Sigmoid colon (tissue), 7 donors: ENCODE measurements at regions of chr1 and their contacts with region 1.

Region 1: DNA sequence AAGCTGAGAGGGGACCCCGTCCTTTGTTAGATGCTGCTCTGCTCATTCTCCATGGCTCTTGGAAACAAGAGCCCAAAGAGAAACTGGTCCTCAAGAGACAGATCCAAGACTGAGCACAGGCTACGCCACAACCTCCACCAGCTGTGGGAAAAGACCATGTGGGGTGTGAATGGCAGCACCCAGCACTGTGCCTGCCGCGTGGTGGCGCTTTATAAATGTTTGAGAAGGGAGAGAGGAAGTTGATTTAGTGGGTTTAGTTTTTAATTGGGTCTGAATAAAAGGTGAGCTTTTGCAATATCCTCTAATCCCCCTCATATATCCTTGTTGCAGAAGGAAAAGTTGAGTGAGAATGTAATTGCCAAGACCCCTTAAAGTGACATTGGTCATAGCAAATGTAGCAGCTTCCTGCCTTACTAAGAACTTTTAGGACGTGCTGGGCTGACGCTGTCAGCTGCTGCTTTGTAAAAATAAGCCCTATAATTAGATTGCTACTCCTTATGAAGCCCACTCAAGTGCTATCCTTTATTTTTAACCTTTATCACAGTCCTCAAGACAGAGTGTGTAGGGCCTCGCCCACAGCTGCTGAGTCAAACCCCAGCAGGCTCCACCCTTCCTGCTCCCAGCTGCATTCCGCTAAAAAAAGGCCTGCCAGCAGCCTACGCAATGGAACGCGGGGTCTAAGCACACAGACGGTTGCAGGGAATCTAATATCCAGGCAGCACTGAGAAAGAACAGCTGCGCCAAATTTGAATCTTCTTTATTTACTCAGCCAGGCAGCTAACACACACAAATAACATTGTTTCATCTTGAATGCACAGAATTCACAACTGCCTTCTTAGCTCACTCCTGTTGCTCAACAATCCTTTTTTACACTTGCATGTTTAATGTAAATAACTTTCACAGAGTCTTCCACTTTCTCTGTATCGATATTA is 47.4 kb upstream of the PRDX6 start:
- DNase-seq: peak; percentile 96
- H3K4me3 ChIP-seq: peak overlapping the region in 2 of 4 donors; percentile 9 to 20
- H3K27ac ChIP-seq: peak overlapping the region; percentile 80 to 90 (median 84)
- H3K4me1 ChIP-seq: peaks cover 0 to 29% (median 25%) of the 10 kb centered on the region in 4 donors
- H3K27me3 ChIP-seq: no peaks in the 10 kb centered on the region
- CTCF ChIP-seq: peak; percentile 35 to 48 (median 44)
- EP300 ChIP-seq: no peak
- POLR2A ChIP-seq: no peak

Region 2: GRCh38 chr1:173451981-173452380 is 22.2 kb after region 1 on chr1:
- intact Hi-C with region 1: loop called (anchors 1 kb)
- DNase-seq: peak; percentile 86
- H3K4me3 ChIP-seq: no peak overlapping the region
- H3K27ac ChIP-seq: peak overlapping the region; percentile 49 to 83 (median 57)
- H3K4me1 ChIP-seq: peaks cover 0 to 14% (median 10%) of the 10 kb centered on the region in 4 donors
- H3K27me3 ChIP-seq: no peaks in the 10 kb centered on the region
- CTCF ChIP-seq: no peak
- EP300 ChIP-seq: no peak
- POLR2A ChIP-seq: no peak

Region 3: GRCh38 chr1:173476664-173477285 is 47.0 kb after region 1 on chr1:
- intact Hi-C with region 1: loop called (anchors 2 kb)
- DNase-seq: peak; percentile 97
- H3K4me3 ChIP-seq: peak overlapping the region; percentile 75 to 92 (median 85)
- H3K27ac ChIP-seq: peak overlapping the region; percentile 98 to 99 (median 99)
- H3K4me1 ChIP-seq: peaks cover 0 to 52% (median 46%) of the 10 kb centered on the region in 4 donors
- H3K27me3 ChIP-seq: no peaks in the 10 kb centered on the region
- CTCF ChIP-seq: no peak
- EP300 ChIP-seq: no peak
- POLR2A ChIP-seq: peak; percentile 18 to 27

Region 4: DNA sequence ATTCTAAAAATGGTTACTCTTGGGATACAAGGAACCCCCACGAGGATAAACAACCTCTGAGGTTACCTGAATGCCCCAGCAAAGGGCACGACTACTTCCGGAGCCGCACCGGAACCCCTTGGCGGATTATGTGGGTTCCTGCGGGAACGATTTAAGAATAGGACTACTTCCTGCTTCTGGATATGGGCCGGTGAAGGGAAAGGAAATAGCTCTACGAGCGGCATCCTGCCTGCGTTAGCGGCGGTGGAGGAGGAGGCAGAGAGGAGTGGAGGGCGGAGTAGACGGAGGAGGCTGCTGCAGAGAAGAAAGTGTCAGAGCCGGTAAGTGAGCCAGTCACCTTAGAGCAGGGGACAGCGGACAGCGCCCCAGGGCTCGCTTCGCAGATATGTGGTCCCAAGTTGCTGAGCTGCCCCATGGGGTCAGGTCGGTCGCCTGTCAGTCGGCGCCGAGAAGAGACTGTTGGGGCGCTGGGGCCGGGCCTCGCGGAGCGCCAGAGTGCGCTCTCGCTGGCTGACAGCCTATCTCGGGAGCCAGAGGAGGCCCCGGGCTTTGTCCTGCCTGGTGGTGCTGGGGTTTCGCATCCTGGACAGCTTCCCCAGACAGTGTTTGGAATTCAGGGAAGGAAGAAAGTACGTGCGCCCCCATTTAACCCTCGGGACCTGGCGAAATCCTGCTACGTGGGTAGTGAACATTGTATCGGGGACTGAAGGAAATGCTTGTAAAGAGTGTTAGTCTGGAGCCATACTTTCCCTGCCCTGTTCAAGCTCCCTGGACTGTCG is 285.2 kb after region 1 on chr1 and contains the start of gene KLHL20:
- intact Hi-C with region 1: loop called (anchors 2 kb)
- DNase-seq: peak; percentile 89
- H3K4me3 ChIP-seq: peak within 1 kb of the TSS; percentile 60 to 82 (median 70)
- H3K27ac ChIP-seq: peak within 1 kb of the TSS; percentile 87 to 94 (median 94)
- H3K4me1 ChIP-seq: peaks cover 0 to 27% (median 19%) of the 10 kb centered on the region in 4 donors
- H3K27me3 ChIP-seq: peaks cover 0 to 14% (median 0%) of the 10 kb centered on the region in 3 donors
- CTCF ChIP-seq: peak in 2 of 4 experiments; percentile 21 to 38
- EP300 ChIP-seq: no peak
- POLR2A ChIP-seq: peak; percentile 51 to 61
- total RNA-seq, gene KLHL20: 35.5 to 57.7 (median 42.6) TPM

Region 5: GRCh38 chr1:173824331-173825081 is 394.8 kb after region 1 on chr1 and contains the starts of genes CENPL and DARS2:
- intact Hi-C with region 1: loop called (anchors 5 kb)
- DNase-seq: peak; percentile 99
- H3K4me3 ChIP-seq: peak within 1 kb of the TSS; percentile 55 to 78 (median 69)
- H3K27ac ChIP-seq: peak within 1 kb of the TSS; percentile 87 to 92 (median 91)
- H3K4me1 ChIP-seq: peaks cover 0 to 25% (median 19%) of the 10 kb centered on the region in 4 donors
- H3K27me3 ChIP-seq: no peaks in the 10 kb centered on the region
- CTCF ChIP-seq: no peak
- EP300 ChIP-seq: peak in 1 of 4 donors; percentile 2
- POLR2A ChIP-seq: no peak
- total RNA-seq, gene CENPL: 3.8 to 7.8 (median 5.4) TPM
- total RNA-seq, gene DARS2: 5.2 to 10.0 (median 7.3) TPM

Region 6: DNA sequence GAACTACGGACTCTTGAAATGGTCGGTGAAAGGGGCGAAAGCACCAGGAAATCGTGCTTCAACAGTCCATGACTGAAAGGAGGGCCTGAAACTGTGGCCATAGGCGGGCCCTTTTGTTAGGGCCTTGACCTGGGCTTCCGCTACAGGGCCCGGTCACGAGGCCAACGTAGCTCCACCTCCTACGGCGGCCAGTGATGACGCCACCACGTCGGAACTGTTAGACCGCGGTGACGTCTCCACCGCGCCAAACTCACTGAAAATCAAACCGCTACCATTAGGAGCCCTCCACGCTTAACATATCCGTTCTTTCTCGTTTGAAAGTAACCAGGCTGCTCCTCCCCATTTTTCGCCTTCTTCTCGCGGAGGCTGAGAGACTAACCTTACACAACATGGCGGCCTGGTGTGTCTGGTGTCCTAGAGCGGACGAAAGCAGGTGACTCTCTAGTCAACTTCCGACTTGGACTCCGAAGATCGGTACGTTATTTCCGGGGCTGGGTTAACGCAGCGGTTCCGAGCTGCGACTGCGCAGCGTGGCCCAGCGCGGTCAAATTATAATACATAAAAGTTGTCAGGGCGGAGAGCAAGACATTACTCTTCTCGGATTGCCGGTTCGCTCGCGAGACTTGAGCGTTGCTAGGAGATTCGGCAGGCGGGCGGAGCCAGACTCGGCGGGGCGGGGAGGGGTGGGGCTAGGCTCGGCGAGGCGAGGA is 1569.6 kb after region 1 on chr1:
- intact Hi-C with region 1: loop called (anchors 10 kb)
- DNase-seq: peak; percentile 99
- H3K4me3 ChIP-seq: peak overlapping the region; percentile 72 to 96 (median 90)
- H3K27ac ChIP-seq: peak overlapping the region; percentile 93 to 99 (median 94)
- H3K4me1 ChIP-seq: peaks cover 0 to 44% (median 26%) of the 10 kb centered on the region in 4 donors
- H3K27me3 ChIP-seq: no peaks in the 10 kb centered on the region
- CTCF ChIP-seq: no peak
- EP300 ChIP-seq: peak in 3 of 4 donors; percentile 23 to 54 (median 51)
- POLR2A ChIP-seq: peak; percentile 95